K562 (cell line): ENCODE measurements at regions of chr4 and their contacts with region 1.

Region 1: GRCh38 chr4:107719922-107720722 is at the start of gene PAPSS1:
- DNase-seq: peak; percentile 93 to 98 (median 93)
- ATAC-seq: peak; percentile 96
- H3K4me3 ChIP-seq: peak within 1 kb of the TSS; percentile 89
- H3K27ac ChIP-seq: peak within 1 kb of the TSS; percentile 77
- H3K4me1 ChIP-seq: peaks cover 5 to 9% of the 10 kb centered on the region in 2 experiments; a peak in 4 of 5 replicates
- H3K27me3 ChIP-seq: no peaks in the 10 kb centered on the region
- CTCF ChIP-seq: no peak
- EP300 ChIP-seq: 0 out of 2 replicates have a peak, but pooled peaks have one; percentile 8
- POLR2A ChIP-seq: peak; percentile 79
- RAD21 ChIP-seq: no peak
- polyA plus RNA-seq, gene PAPSS1: 47.0 to 53.9 TPM

Region 2: DNA sequence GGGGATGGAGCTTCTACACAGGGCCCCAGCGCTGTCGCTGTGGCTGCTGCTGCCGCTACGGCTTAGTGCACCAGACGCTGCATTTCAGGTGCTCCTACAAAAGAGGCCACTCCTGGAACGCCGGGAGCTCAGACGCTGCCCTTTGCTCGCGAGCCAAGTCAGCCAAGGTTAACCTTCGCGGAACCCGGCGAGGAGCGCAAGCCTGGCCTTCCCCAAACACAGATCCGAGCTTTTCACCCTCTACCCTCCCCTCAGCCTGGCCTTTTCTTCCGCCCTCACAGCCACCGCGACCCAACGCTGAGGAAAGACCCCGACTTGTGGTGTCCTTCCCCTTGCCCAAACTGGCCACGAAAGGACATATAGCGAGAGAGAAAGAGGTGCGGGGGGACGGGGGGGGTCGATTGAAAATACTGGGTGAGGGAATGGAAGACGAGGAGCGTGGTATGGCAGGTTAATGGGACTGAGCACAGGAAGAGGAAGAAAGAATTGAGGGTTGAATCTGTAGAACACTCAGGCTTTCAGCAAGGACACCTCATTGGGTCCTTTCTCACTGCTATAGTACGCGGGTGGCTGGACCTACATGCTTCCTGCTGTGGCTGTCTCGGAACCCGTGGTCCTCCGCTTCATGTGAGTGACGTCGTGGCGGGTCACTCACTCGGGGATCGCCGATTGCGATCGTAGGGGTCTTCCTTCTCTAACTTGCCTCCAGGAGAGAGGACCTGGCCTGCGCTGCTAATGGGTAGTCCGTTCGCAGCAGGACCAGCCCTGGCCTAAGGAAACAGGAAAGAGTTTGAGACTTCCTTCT is 1404.0 kb before region 1 on chr4 and contains the starts of genes AIMP1 and TBCK:
- CTCF ChIA-PET with region 1: no interaction called
- POLR2A ChIA-PET with region 1: no interaction called
- in situ Hi-C with region 1: loop called (anchors 25 kb)
- intact Hi-C with region 1: loop called (anchors 5 kb)
- DNase-seq: peak; percentile 78 to 93 (median 82)
- ATAC-seq: peak; percentile 86
- H3K4me3 ChIP-seq: peak within 1 kb of the TSS; percentile 96
- H3K27ac ChIP-seq: peak within 1 kb of the TSS; percentile 99
- H3K4me1 ChIP-seq: peaks cover 5 to 15% of the 10 kb centered on the region in 2 experiments; a peak in 4 of 5 replicates
- H3K27me3 ChIP-seq: no peaks in the 10 kb centered on the region
- CTCF ChIP-seq: 0 out of 6 replicates have a peak, but pooled peaks of 1 of the 3 experiments have one; percentile 10
- EP300 ChIP-seq: peak; percentile 37; the same call in 1 of the 2 replicates
- POLR2A ChIP-seq: peak; percentile 93
- RAD21 ChIP-seq: no peak
- polyA plus RNA-seq, gene AIMP1: 128 to 141 TPM
- polyA plus RNA-seq, gene TBCK: 5.3 to 11.1 TPM

Region 3: DNA sequence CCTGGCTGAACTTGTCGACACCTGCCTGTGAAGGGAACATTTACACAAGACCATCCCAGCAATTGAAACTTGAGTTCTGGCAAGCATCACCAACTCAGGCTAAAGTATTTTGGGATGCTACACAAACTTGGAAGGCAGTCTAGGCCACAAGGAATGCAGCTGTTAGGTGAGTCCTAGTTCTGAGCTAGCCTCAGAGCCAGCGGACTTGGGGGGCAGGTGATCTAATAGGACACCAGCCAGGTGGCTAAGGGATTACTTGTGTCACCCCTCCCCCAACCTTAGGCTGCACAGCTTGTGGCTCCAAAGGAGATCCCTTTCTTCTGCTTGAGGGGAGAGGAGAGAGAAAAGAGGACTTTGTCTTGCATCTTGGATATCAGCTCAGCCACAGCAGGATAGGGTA is 621.7 kb before region 1 on chr4:
- CTCF ChIA-PET with region 1: no interaction called
- POLR2A ChIA-PET with region 1: no interaction called
- in situ Hi-C with region 1: no loop called
- intact Hi-C with region 1: no loop called
- DNase-seq: no peak
- ATAC-seq: no peak
- H3K4me3 ChIP-seq: no peak overlapping the region
- H3K27ac ChIP-seq: no peak overlapping the region
- H3K4me1 ChIP-seq: no peaks in the 10 kb centered on the region
- H3K27me3 ChIP-seq: no peaks in the 10 kb centered on the region
- CTCF ChIP-seq: no peak
- EP300 ChIP-seq: no peak
- POLR2A ChIP-seq: no peak
- RAD21 ChIP-seq: no peak